ENCODE measurements at regions of chr4 and their contacts with region 1.

Region 1: GRCh38 chr4:88591787-88592599 is at the start of gene HERC3:
- DNase-seq: peak; percentile 90
- H3K4me3 Mint-ChIP-seq: peak within 1 kb of the TSS; percentile 98
- H3K27ac Mint-ChIP-seq: peak within 1 kb of the TSS; percentile 83
- H3K4me1 Mint-ChIP-seq: peaks cover 41% of the 10 kb centered on the region
- H3K27me3 Mint-ChIP-seq: no peaks in the 10 kb centered on the region
- total RNA-seq, gene HERC3: 24.4 to 25.8 TPM

Region 2: GRCh38 chr4:88523325-88524129 is 68.5 kb before region 1 on chr4 and contains the start of gene PYURF:
- CTCF ChIA-PET with region 1: no interaction called
- intact Hi-C with region 1: loop called (anchors 1 kb)
- DNase-seq: peak; percentile 85
- H3K4me3 Mint-ChIP-seq: peak within 1 kb of the TSS; percentile 92
- H3K27ac Mint-ChIP-seq: peak within 1 kb of the TSS; percentile 91
- H3K4me1 Mint-ChIP-seq: peaks cover 40% of the 10 kb centered on the region
- H3K27me3 Mint-ChIP-seq: no peaks in the 10 kb centered on the region
- total RNA-seq, gene PYURF: 51.5 to 54.2 TPM

Region 3: GRCh38 chr4:88573995-88574394 is 18.0 kb before region 1 on chr4:
- CTCF ChIA-PET with region 1: no interaction called
- intact Hi-C with region 1: no loop called
- DNase-seq: no peak
- H3K4me3 Mint-ChIP-seq: no peak overlapping the region
- H3K27ac Mint-ChIP-seq: no peak overlapping the region
- H3K4me1 Mint-ChIP-seq: no peaks in the 10 kb centered on the region
- H3K27me3 Mint-ChIP-seq: peaks cover 3% of the 10 kb centered on the region

Region 4: GRCh38 chr4:88653371-88653946 is 61.5 kb after region 1 on chr4:
- CTCF ChIA-PET with region 1: no interaction called
- intact Hi-C with region 1: loop called (anchors 2 kb)
- DNase-seq: no peak
- H3K4me3 Mint-ChIP-seq: no peak overlapping the region
- H3K27ac Mint-ChIP-seq: no peak overlapping the region
- H3K4me1 Mint-ChIP-seq: peaks cover 31% of the 10 kb centered on the region
- H3K27me3 Mint-ChIP-seq: no peaks in the 10 kb centered on the region

Region 5: DNA sequence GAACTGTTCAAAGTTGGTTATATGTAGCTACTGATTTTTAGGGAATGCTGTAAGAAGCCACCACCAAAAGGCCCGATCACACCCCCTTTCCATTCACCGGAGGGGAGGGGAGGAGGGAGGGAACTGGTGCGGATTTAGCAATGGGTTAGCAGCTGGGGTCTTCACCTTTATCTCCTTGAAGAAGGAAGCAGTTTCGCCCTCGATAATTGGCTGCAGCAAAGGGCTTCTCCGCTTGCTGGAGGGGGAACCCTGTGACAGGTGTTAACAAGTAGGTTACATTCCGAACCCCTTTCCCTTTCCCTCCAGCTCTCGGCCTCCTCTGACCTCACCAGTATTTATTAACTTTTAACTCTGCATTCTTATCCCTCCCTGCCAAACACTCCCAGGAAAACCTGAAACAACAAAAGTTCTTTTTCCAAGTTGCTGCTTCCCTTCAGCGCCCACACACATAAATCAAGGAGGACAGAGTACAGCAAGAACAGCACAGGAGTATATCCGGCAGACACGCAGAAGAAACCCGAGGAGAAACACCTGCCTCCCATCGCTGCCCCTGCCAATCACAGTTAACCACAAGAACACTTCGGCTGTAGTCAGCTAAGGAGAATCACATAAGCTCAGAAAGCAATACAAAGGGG is 145.4 kb after region 1 on chr4:
- CTCF ChIA-PET with region 1: no interaction called
- intact Hi-C with region 1: loop called (anchors 1 kb)
- DNase-seq: peak; percentile 70
- H3K4me3 Mint-ChIP-seq: peak overlapping the region; percentile 58
- H3K27ac Mint-ChIP-seq: peak overlapping the region; percentile 9
- H3K4me1 Mint-ChIP-seq: peaks cover 20% of the 10 kb centered on the region
- H3K27me3 Mint-ChIP-seq: no peaks in the 10 kb centered on the region

Region 6: DNA sequence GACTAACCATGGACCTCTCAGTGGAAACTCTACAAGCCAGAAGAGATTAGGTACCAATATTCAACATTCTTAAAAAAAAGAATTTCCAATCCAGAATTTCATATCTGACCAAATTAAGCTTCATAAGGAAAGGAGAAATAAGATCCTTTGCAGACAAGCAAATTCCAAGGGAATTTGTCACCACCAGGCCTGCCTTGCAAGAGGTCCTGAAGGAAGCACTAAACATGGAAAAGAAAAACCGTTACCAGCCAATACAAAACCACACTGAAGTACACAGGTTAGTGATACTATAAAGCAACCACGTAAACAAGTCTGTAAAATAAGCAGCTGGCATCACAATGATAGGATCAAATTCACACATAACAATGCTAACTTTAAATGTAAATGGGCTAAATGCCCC is 308.4 kb after region 1 on chr4:
- CTCF ChIA-PET with region 1: no interaction called
- intact Hi-C with region 1: no loop called
- DNase-seq: no peak
- H3K4me3 Mint-ChIP-seq: no peak overlapping the region
- H3K27ac Mint-ChIP-seq: no peak overlapping the region
- H3K4me1 Mint-ChIP-seq: no peaks in the 10 kb centered on the region
- H3K27me3 Mint-ChIP-seq: no peaks in the 10 kb centered on the region

Region 7: DNA sequence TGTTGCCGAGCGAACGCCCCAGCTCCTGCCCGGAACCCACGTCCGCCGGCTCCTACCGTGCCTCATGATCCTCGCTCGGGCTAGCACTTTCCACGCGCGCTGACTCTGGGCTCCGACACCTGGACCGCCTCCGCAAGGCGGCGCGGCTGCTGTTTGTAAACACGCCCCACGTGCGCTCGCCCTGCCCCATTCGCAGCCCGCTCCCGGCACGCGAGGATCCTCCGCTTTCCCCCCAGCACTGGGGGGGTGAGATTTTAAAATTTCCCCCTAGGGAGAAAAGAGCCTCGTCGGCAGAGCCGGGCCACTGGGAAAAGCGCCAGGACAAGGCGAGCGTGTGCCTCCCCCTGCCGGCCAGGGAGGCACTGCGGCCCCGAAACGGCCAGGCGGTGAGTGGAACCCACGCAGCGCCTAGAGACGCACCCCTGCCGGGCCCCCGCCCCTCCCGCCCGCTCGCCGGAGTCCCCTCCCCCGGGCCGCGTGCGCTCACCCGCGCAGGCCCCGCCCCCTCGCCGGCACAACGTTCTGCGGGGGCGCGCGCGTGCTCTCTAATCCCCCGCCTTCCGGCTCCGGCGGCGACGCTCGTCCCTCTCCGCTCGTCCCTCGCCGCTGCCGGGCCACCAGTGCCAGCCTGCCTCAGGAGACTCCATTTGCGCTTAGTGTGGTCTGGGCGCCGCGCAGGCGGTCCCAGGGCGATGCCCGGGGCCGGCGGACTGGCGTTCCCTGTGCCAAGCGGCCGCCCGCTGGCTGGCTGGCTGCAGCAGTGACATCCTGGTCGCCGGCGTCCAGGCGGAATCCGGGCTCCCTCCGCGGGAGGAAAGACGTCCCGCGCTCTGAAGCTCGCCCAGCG is 519.2 kb after region 1 on chr4 and contains the start of gene TIGD2:
- CTCF ChIA-PET with region 1: no interaction called
- intact Hi-C with region 1: loop called (anchors 2 kb)
- DNase-seq: peak; percentile 81
- H3K4me3 Mint-ChIP-seq: peak within 1 kb of the TSS; percentile 76
- H3K27ac Mint-ChIP-seq: no peak within 1 kb of the TSS
- H3K4me1 Mint-ChIP-seq: peaks cover 11% of the 10 kb centered on the region
- H3K27me3 Mint-ChIP-seq: peaks cover 18% of the 10 kb centered on the region
- total RNA-seq, gene TIGD2: 1.1 to 1.3 TPM